ENCODE measurements at regions of chr9 and their contacts with region 1.

Region 1: DNA sequence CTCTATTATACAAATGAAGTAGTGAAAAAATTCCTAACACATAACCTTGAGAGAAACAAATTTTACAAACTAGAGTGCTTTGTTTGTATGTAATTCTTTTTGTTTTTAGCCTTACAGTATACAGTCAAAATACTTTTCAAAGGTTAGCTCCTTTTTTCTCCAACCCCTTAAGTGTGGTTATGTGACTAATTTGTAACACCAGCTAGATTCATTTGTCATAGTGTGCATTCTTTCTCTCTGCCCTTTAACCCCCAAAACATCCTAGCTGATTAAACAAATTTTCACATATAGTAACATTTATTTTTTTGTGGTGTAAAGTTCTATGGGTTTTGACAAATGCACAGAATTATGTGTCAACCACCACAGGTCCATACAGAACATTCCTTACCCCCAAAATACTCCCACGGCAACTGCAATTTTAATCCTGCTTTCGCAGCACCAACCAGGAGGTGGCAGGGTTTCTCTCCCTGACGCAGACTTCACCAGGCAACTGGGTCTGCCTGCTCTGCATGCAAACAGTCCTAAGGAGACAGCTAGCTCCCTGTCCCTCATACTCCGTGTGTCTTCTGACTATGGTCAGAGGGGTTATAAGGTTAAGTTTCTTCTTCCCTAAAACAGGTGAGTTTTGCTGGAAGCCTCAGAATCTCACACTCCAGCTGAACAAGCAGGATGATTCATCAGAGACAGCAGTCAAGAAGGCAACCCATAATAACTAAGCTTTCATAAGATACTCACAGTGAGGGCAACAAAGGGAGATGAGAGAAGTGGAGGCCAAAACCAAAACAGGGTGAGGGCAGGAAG is 44.5 kb upstream of the NR5A1 start:
- H3K4me3 ChIP-seq: no peak overlapping the region
- H3K27ac ChIP-seq: no peak overlapping the region
- H3K4me1 ChIP-seq: no peaks in the 10 kb centered on the region
- CTCF ChIP-seq: peak; percentile 39; the same call in 1 of the 2 replicates

Region 2: GRCh38 chr9:124537926-124538325 is 13.7 kb before region 1 on chr9:
- CTCF ChIA-PET with region 1: interaction called, 65 read pairs
- POLR2A ChIA-PET with region 1: no interaction called
- H3K4me3 ChIP-seq: no peak overlapping the region
- H3K27ac ChIP-seq: no peak overlapping the region
- H3K4me1 ChIP-seq: no peaks in the 10 kb centered on the region
- CTCF ChIP-seq: no peak

Region 3: GRCh38 chr9:124574534-124575341 is 23.1 kb after region 1 on chr9:
- CTCF ChIA-PET with region 1: interaction called, 30 read pairs
- POLR2A ChIA-PET with region 1: interaction called, 5 read pairs
- H3K4me3 ChIP-seq: no peak overlapping the region
- H3K27ac ChIP-seq: no peak overlapping the region
- H3K4me1 ChIP-seq: no peaks in the 10 kb centered on the region
- CTCF ChIP-seq: no peak

Region 4: GRCh38 chr9:124593651-124594058 is 42.0 kb after region 1 on chr9:
- CTCF ChIA-PET with region 1: interaction called, 23 read pairs
- POLR2A ChIA-PET with region 1: no interaction called
- H3K4me3 ChIP-seq: no peak overlapping the region
- H3K27ac ChIP-seq: no peak overlapping the region
- H3K4me1 ChIP-seq: peaks cover 15% of the 10 kb centered on the region
- CTCF ChIP-seq: no peak

Region 5: GRCh38 chr9:124658165-124659017 is 106.7 kb after region 1 on chr9:
- CTCF ChIA-PET with region 1: interaction called, 22 read pairs
- POLR2A ChIA-PET with region 1: no interaction called
- H3K4me3 ChIP-seq: peak overlapping the region; percentile 57
- H3K27ac ChIP-seq: peak overlapping the region; percentile 72
- H3K4me1 ChIP-seq: peaks cover 6% of the 10 kb centered on the region; the same call in 1 of the 2 replicates
- CTCF ChIP-seq: no peak

Region 6: GRCh38 chr9:124743686-124744348 is 192.1 kb after region 1 on chr9:
- CTCF ChIA-PET with region 1: interaction called, 11 read pairs
- POLR2A ChIA-PET with region 1: no interaction called
- H3K4me3 ChIP-seq: no peak overlapping the region
- H3K27ac ChIP-seq: no peak overlapping the region
- H3K4me1 ChIP-seq: peaks cover 2% of the 10 kb centered on the region; the same call in 1 of the 2 replicates
- CTCF ChIP-seq: no peak

Region 7: DNA sequence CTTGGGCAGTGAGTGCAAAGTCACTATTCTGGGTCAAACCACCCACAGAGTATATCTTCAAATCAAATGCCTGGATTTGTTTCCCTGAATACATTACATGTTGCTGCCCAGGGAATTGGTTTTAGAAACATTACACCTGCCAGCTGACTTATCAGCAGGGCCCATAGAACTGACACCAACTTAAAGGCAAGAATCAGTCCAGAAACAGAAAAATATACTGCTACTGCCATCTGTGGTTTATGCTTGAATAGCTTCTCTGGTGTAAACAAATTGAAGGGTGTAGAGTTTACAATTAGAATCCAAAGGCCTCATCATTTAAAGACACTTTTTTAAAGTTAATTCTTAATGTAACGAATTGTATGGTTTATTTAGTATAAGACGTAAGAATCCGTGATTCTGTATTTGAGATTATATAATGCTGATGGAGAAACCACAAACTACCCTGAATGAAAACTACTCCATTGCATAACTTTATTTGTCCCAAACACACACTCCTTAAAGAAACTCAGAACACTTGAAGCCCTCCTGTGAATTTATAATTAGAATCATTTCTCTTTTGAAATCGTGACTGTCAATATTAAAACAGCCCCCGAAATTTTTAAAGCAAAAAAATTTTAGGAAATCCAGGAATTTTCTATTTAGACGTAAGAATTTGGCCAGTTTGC is 213.2 kb after region 1 on chr9:
- CTCF ChIA-PET with region 1: interaction called, 20 read pairs
- POLR2A ChIA-PET with region 1: no interaction called
- H3K4me3 ChIP-seq: no peak overlapping the region
- H3K27ac ChIP-seq: no peak overlapping the region
- H3K4me1 ChIP-seq: peaks cover 27% of the 10 kb centered on the region
- CTCF ChIP-seq: no peak